ENCODE measurements at regions of chr13 and their contacts with region 1.

Region 1: DNA sequence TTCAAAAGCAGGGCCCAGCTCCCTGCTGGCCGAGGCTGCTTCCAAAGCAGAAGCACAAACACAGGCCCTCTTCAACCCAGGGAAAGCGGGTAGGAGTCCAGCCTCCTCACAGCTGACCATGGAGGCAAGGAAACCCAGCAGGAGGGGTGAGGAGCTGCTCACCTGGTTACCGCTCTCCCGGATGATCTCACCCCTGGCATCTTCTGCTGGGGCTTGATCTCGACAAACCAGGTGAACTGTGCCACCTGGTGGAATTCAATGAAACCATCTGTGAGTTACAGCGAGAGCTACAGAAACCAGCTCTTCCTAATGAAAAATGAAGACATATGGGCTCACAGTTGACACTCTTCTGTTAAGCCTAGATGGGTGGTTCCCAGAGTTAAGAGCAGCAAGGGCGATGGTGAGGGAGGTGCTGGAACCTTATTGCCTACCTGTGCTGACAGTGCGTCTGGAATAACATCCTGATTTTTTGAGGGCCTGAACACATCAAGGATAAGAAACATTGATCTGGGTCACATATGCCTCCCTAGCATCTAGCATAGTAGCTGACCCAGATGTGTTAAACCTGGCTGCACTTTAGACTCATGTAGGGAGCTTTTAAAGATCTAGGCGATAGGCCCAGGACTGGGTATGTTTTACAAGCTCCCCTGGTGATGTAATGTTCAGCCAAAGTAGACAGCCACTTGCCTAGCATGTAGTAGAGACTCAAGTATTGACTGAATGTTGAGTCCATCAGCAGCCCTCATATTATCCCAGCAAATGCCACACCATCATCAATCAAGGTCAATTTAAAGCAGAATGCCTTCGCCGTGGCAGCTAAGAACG is 6.1 kb downstream of the DHRS12 start:
- H3K4me3 ChIP-seq: no peak overlapping the region
- H3K27ac ChIP-seq: no peak overlapping the region
- H3K4me1 ChIP-seq: peaks cover 5% of the 10 kb centered on the region
- CTCF ChIP-seq: no peak; the same call in 1 of the 2 replicates

Region 2: GRCh38 chr13:51125498-51126226 is 672.2 kb before region 1 on chr13:
- CTCF ChIA-PET with region 1: interaction called, 19 read pairs
- POLR2A ChIA-PET with region 1: no interaction called
- H3K4me3 ChIP-seq: no peak overlapping the region
- H3K27ac ChIP-seq: no peak overlapping the region
- H3K4me1 ChIP-seq: no peaks in the 10 kb centered on the region
- CTCF ChIP-seq: peak; percentile 42; the same call in 1 of the 2 replicates

Region 3: GRCh38 chr13:51435002-51435578 is 362.8 kb before region 1 on chr13:
- CTCF ChIA-PET with region 1: interaction called, 39 read pairs
- POLR2A ChIA-PET with region 1: no interaction called
- H3K4me3 ChIP-seq: no peak overlapping the region
- H3K27ac ChIP-seq: no peak overlapping the region
- H3K4me1 ChIP-seq: peaks cover 3% of the 10 kb centered on the region; the same call in 1 of the 2 replicates
- CTCF ChIP-seq: no peak

Region 4: DNA sequence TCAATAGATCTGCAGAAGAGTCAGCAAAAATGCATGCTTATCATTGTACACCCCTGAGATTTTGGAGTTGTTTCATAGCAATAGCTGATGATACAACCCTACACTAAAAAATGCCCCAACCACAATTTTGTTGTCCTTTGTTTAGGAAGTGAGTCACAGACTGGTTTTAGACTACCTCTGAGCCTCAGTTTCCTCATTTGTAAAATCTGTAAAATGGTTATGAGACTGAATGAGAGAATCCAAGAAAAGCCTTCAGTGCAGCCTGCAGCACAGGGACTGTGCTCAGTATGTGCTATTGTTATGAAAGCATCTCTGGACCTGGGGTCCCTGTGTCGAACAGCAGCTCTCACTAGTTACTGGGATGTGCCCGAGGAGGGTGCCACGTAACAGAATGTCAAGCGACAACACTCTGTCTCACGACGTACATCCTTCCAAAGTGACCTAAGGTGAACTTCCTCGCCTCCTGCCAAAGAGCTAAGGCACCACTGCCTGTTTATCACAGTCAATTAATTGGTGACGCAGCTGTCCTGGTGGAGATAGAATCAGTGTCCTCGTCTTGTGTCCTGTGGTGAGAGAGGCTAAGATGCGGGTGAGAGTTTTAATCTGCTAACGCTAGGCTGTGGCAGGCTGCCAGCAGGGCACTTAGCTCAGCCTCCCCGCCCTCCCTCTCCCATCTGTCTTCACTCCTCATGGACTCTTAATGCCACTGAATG is 12.0 kb before region 1 on chr13:
- CTCF ChIA-PET with region 1: interaction called, 16 read pairs
- POLR2A ChIA-PET with region 1: interaction called, 3 read pairs
- H3K4me3 ChIP-seq: no peak overlapping the region
- H3K27ac ChIP-seq: peak overlapping the region; percentile 22; the same call in 1 of the 2 replicates
- H3K4me1 ChIP-seq: peaks cover 13% of the 10 kb centered on the region
- CTCF ChIP-seq: no peak

Measured in HEK293 (cell line).